Transverse colon (tissue), 4 donors: ENCODE measurements at regions of chr15 and their contacts with region 1.

Region 1: DNA sequence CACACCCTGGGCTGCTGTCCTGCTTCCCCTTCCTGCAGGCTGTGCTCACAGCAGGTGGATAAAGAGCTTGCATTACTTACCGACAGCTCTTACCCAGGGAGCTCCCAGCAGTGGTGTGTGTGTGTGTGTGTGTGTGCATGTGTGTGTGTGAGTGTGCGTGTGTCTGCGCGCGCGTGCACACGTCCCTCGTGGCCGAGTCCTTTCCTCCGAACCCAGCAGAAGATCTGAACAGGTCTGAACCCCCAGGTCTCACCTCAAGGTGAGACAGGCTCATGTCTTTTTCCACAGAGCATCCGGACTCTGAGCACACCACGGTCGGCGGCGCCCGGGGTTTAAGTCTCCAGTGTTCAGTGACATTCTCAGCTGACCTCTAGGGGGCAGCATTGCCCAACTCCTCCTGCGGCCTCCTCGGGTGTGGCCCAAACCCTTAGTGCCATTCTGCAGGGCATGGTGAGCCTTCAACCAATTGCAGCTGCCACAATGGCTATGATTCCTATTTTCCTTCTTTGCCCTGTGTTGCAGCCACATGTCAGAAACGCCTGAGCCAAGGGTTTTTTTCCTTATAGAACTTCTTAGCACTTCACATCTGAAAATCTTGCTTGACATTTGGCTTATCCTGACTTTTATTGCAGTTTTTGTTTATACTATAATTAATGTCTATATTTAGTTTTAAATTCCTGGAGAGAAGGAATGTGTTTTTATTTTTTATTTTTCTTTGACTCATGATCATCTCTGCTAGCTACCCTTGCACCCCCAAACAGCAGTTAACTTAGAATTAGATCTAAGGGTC is 64.1 kb upstream of the KLHL25 start:
- DNase-seq: peak; percentile 80
- H3K4me3 ChIP-seq: no peak overlapping the region
- H3K27ac ChIP-seq: no peak overlapping the region
- H3K4me1 ChIP-seq: peaks cover 0 to 14% (median 5%) of the 10 kb centered on the region in 4 donors
- H3K27me3 ChIP-seq: peaks cover 22% of the 10 kb centered on the region
- CTCF ChIP-seq: peak; percentile 69 to 82 (median 77)
- EP300 ChIP-seq: no peak
- POLR2A ChIP-seq: no peak

Region 2: GRCh38 chr15:86164232-86164898 is 305.6 kb after region 1 on chr15:
- in situ Hi-C with region 1: no loop called
- intact Hi-C with region 1: no loop called
- DNase-seq: no peak
- H3K4me3 ChIP-seq: no peak overlapping the region
- H3K27ac ChIP-seq: peak overlapping the region in 3 of 4 donors; percentile 13 to 40 (median 14)
- H3K4me1 ChIP-seq: peaks cover 0 to 2% (median 0%) of the 10 kb centered on the region in 4 donors
- H3K27me3 ChIP-seq: no peaks in the 10 kb centered on the region
- CTCF ChIP-seq: no peak
- EP300 ChIP-seq: no peak
- POLR2A ChIP-seq: no peak

Region 3: GRCh38 chr15:86624261-86625036 is 765.7 kb after region 1 on chr15:
- in situ Hi-C with region 1: loop called in 1 of 4 experiments (anchors 25 kb)
- intact Hi-C with region 1: no loop called
- DNase-seq: peak; percentile 79
- H3K4me3 ChIP-seq: no peak overlapping the region
- H3K27ac ChIP-seq: no peak overlapping the region
- H3K4me1 ChIP-seq: peaks cover 0 to 33% (median 14%) of the 10 kb centered on the region in 4 donors
- H3K27me3 ChIP-seq: no peaks in the 10 kb centered on the region
- CTCF ChIP-seq: peak; percentile 34 to 86 (median 54)
- EP300 ChIP-seq: no peak
- POLR2A ChIP-seq: no peak

Region 4: DNA sequence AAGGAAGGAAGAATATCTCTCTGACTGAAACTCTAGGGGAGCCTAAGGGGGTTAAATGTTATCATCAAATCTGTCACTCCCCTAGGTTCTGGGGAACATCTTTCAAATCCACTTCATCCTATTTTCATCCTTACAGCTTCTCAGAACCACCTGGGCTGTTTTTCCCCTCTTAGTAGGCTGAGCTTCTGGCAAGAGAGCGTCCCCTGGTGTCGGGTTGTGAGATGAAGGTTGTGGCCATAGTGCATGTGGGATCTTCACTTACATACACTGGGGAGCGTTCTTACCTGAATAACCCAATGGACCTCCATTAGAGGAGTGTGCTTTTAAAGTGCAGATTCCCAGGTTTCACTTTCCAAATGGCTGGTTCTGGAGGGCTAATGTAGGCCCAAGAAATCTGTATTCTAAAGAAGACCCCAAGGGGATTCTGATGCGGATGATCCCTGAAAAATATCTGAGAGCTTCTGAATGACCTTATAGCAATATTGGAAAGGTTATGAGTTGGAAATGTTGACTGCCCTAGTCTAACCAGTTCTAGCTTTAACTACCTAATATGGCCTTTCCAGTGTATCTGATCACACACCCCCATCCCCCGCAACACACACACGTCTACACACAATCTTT is 884.6 kb after region 1 on chr15:
- in situ Hi-C with region 1: loop called in 2 of 4 experiments (anchors 10 to 25 kb)
- intact Hi-C with region 1: no loop called
- DNase-seq: peak; percentile 64
- H3K4me3 ChIP-seq: no peak overlapping the region
- H3K27ac ChIP-seq: no peak overlapping the region
- H3K4me1 ChIP-seq: peaks cover 0 to 3% (median 1%) of the 10 kb centered on the region in 4 donors
- H3K27me3 ChIP-seq: no peaks in the 10 kb centered on the region
- CTCF ChIP-seq: peak; percentile 62 to 81 (median 73)
- EP300 ChIP-seq: no peak
- POLR2A ChIP-seq: no peak

Region 5: DNA sequence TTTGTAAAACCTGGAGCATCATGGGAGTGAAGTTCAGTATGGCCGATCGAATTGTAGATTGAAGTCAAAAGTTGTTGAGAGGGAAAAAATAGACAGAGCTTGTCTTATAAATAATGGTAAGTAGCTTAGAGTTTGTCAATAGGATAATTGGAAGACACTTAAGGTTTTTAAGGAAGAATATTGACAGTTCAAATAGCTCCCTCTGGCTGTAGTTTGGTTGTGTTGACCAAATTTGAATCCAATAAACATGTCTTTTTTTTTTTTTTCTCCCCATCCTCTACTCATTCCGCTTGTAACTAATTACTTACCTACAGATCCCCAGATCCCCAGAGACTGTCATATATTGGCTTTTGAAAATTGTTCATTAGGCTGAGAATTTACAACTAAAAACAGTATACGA is 897.9 kb after region 1 on chr15:
- in situ Hi-C with region 1: loop called in 1 of 4 experiments (anchors 25 kb)
- intact Hi-C with region 1: no loop called
- DNase-seq: no peak
- H3K4me3 ChIP-seq: no peak overlapping the region
- H3K27ac ChIP-seq: no peak overlapping the region
- H3K4me1 ChIP-seq: no peaks in the 10 kb centered on the region
- H3K27me3 ChIP-seq: no peaks in the 10 kb centered on the region
- CTCF ChIP-seq: peak in 1 of 5 experiments; percentile 3
- EP300 ChIP-seq: no peak
- POLR2A ChIP-seq: no peak